WTC11 (cell line): ENCODE measurements at regions of chr3 and their contacts with region 1.

Region 1: GRCh38 chr3:142578327-142579223 is at the start of gene ATR:
- DNase-seq: peak; percentile 97
- ATAC-seq: peak; percentile 97
- H3K4me3 Mint-ChIP-seq: peak within 1 kb of the TSS; percentile 98
- H3K27ac Mint-ChIP-seq: peak within 1 kb of the TSS; percentile 97
- H3K4me1 Mint-ChIP-seq: peaks cover 35% of the 10 kb centered on the region
- H3K27me3 Mint-ChIP-seq: no peaks in the 10 kb centered on the region
- CTCF ChIP-seq: no peak
- total RNA-seq, gene ATR: 22.9 to 26.7 TPM (median 24.2 TPM) in 3 replicates

Region 2: DNA sequence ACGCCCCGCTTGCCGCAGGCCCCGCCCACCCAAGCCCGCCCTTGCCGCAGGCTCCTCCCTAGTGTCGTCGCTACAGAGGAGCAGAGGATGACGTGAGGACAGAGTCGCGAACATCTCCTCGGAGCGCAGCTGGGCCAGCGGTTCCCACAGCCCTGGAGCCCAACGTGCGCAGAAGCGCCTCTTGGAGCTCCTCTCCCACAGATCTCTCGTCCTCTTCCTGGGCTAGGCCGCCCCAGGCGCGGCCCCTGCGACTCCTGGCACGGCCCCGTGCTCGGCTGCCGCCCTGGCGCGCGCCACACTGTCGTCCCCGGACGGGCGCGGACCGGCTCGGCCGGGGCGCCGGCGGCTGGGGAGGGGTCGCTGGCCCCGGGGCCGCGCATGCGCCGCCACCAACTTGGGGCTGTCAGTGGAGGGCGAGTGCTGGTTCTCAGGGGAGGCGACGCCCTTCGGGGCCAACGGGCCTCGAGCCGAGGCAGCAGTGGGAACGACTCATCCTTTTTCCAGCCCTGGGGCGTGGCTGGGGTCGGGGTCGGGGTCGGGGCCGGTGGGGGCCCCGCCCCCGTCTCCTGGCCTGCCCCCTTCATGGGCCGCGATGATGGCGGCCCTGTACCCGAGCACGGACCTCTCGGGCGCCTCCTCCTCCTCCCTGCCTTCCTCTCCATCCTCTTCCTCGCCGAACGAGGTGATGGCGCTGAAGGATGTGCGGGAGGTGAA is 145.6 kb after region 1 on chr3 and contains the start of gene TRPC1:
- CTCF ChIA-PET with region 1: no interaction called
- POLR2A ChIA-PET with region 1: interaction called, 11 read pairs
- DNase-seq: peak; percentile 82
- ATAC-seq: peak; percentile 78
- H3K4me3 Mint-ChIP-seq: peak within 1 kb of the TSS; percentile 90
- H3K27ac Mint-ChIP-seq: peak within 1 kb of the TSS; percentile 94
- H3K4me1 Mint-ChIP-seq: peaks cover 28% of the 10 kb centered on the region
- H3K27me3 Mint-ChIP-seq: peaks cover 6% of the 10 kb centered on the region; the same call in 1 of the 2 replicates
- CTCF ChIP-seq: no peak
- total RNA-seq, gene TRPC1: 13.8 to 20.3 TPM (median 20.0 TPM) in 3 replicates